ENCODE measurements at regions of chr5 and their contacts with region 1.

Region 1: GRCh38 chr5:131796793-131797693 is at the start of gene FNIP1:
- DNase-seq: peak; percentile 99
- ATAC-seq: peak; percentile 94
- H3K4me3 Mint-ChIP-seq: peak within 1 kb of the TSS; percentile 97
- H3K27ac Mint-ChIP-seq: peak within 1 kb of the TSS; percentile 91
- H3K4me1 Mint-ChIP-seq: peaks cover 33% of the 10 kb centered on the region
- H3K27me3 Mint-ChIP-seq: no peaks in the 10 kb centered on the region
- CTCF ChIP-seq: no peak
- total RNA-seq, gene FNIP1: 29.8 and 34.0 TPM in 2 replicates

Region 2: DNA sequence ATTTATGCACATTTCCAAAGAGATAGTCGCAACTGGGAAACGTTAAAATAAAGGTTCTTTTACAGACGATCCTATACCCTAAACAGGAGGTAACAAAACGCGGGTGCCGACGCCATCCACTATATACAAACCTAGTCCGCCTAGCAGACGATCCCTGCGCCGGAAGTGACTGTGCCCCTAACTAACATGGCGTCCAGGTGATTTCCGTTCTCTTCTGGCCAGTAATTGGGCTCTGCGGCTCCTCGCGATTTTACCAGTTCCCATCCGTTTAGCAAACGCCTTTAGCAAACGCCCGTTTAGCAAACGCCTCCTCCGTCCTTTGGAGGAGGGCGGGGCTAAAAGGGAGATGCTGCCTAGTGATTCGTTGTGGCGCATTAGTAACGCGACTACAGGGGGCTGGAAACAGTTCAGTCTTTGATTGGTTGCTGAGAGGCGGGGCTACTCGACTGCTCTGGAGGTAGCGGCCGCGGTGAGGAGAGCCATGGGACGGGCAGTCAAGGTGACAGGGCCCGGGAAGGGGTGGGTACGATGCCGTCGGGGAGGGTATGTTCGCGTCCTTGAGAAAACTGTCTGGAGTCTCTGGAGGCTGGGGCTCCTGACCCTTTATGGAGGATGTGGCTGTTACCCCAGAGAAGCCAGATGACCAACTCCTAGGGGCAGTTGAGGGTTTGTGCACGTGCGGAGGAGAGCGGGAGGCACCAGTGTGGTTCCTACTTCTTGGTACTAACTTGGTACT is 626.3 kb before region 1 on chr5 and contains the start of gene LYRM7:
- CTCF ChIA-PET with region 1: no interaction called
- POLR2A ChIA-PET with region 1: no interaction called
- intact Hi-C with region 1: loop called (anchors 2 kb)
- DNase-seq: peak; percentile 80
- ATAC-seq: peak; percentile 96
- H3K4me3 Mint-ChIP-seq: peak within 1 kb of the TSS; percentile 98
- H3K27ac Mint-ChIP-seq: peak within 1 kb of the TSS; percentile 93
- H3K4me1 Mint-ChIP-seq: peaks cover 42% of the 10 kb centered on the region
- H3K27me3 Mint-ChIP-seq: no peaks in the 10 kb centered on the region
- CTCF ChIP-seq: no peak
- total RNA-seq, gene LYRM7: 11.9 and 13.1 TPM in 2 replicates

Region 3: DNA sequence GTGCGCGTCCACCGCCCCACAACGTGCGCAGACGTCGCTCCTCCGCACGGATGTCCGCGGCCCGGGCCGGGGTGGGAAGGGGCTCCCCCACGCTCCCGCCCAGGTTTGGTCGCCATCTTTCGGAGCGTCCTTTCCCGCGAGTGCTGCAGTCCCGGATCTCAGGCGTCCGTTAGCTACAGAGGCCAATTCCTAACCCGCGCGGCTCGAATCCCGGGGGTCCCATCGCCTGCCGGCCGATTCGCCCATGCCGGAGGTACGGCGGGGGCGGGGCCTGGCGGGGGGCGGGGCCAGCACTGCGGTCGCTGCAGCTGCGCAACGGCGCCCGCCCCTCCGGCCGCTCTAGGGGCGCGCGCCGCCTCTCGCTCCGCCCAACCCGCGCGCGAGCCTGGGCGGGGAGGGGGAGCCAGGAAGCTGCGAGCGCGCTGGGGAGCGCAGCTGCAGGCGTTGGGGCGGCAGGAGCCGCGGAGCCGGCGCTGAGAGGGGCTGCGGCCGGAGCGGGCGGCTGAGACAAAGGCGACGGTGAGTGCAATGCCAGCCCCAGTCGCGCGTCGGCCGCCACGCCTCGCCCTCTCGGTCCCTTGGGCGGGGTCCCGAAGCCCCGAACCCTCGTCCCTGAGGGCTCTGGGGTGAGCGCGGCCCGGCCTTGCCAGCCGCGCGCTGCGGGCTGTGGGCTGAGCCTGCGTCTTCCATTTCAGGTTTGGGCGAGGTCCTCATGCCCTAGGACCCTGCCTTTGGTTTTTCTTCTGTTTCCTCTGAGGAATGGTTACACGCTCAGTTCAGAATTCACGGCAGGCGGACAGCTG is 533.2 kb before region 1 on chr5 and contains the start of gene CDC42SE2:
- CTCF ChIA-PET with region 1: no interaction called
- POLR2A ChIA-PET with region 1: no interaction called
- intact Hi-C with region 1: loop called (anchors 10 kb)
- DNase-seq: peak; percentile 94
- ATAC-seq: peak; percentile 86
- H3K4me3 Mint-ChIP-seq: peak within 1 kb of the TSS; percentile 90
- H3K27ac Mint-ChIP-seq: peak within 1 kb of the TSS; percentile 96
- H3K4me1 Mint-ChIP-seq: peaks cover 45% of the 10 kb centered on the region
- H3K27me3 Mint-ChIP-seq: no peaks in the 10 kb centered on the region
- CTCF ChIP-seq: no peak
- total RNA-seq, gene CDC42SE2: 114 and 122 TPM in 2 replicates

Region 4: DNA sequence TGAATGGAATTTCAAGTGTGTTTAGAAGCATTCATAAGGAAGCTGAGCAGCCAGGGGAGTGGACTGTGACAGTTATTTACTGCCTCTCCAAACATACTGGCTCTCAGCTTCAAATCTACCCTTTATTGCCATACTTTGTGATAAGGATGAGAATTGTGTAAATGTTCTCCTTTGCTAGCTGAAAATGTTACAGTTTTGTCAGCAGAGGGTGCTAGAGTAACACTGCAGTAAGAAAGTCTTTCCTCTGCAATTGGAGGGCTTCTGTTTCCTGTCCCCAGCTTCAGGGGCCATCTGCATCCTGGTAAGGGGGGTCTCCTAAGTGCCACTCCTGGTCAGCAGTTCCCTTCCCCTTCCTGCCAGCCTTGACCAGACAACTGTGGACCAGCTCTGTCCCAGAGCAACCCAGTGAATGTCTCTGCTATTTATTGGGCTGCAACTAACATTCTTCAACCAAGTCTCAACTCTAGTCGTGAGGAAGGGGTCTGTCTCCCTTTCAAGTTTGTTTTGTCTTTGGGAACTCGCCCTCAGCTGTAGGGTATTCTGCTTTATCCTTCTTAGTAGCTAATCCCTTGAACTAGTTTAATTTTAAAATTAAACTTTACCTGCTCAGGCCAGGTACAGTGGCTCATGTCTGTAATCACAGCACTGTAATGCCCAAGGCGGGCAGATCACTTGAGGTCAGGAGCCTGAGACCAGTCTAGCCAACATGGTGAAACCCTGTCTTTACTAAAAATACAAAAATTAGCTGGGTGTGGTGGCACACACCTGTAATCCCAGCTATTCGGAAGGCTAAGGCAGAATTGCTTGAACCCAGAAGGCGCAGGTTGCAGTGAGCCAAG is 207.3 kb before region 1 on chr5:
- CTCF ChIA-PET with region 1: interaction called, 11 read pairs
- POLR2A ChIA-PET with region 1: no interaction called
- intact Hi-C with region 1: no loop called
- DNase-seq: no peak
- ATAC-seq: peak; percentile 57
- H3K4me3 Mint-ChIP-seq: no peak overlapping the region
- H3K27ac Mint-ChIP-seq: no peak overlapping the region
- H3K4me1 Mint-ChIP-seq: peaks cover 25% of the 10 kb centered on the region
- H3K27me3 Mint-ChIP-seq: no peaks in the 10 kb centered on the region
- CTCF ChIP-seq: peak; percentile 48

Region 5: GRCh38 chr5:131647048-131647769 is 149.8 kb before region 1 on chr5:
- CTCF ChIA-PET with region 1: no interaction called
- POLR2A ChIA-PET with region 1: interaction called, 20 read pairs
- intact Hi-C with region 1: no loop called
- DNase-seq: no peak
- ATAC-seq: peak; percentile 92
- H3K4me3 Mint-ChIP-seq: peak overlapping the region; percentile 76
- H3K27ac Mint-ChIP-seq: peak overlapping the region; percentile 90
- H3K4me1 Mint-ChIP-seq: peaks cover 37% of the 10 kb centered on the region
- H3K27me3 Mint-ChIP-seq: no peaks in the 10 kb centered on the region
- CTCF ChIP-seq: no peak

Region 6: DNA sequence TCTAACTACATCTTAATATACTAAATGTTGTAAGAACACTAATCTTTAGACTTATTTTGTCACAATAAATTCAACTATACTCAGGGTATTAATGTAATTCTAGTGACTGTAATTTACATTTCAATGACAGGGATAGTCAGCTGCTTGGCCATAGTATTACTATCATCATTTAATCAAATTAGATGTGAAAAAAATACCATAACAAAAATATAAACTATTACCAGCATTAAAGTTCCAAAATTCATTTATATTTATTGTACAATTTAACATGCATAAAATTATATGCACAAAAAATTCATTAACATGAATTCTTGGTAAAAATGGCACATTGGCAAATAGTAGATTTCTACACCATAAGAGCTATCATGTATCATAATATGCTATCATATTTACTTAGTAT is 29.2 kb before region 1 on chr5:
- CTCF ChIA-PET with region 1: no interaction called
- POLR2A ChIA-PET with region 1: interaction called, 11 read pairs
- intact Hi-C with region 1: no loop called
- DNase-seq: no peak
- ATAC-seq: no peak
- H3K4me3 Mint-ChIP-seq: no peak overlapping the region
- H3K27ac Mint-ChIP-seq: no peak overlapping the region
- H3K4me1 Mint-ChIP-seq: peaks cover 30% of the 10 kb centered on the region
- H3K27me3 Mint-ChIP-seq: no peaks in the 10 kb centered on the region
- CTCF ChIP-seq: no peak

Region 7: DNA sequence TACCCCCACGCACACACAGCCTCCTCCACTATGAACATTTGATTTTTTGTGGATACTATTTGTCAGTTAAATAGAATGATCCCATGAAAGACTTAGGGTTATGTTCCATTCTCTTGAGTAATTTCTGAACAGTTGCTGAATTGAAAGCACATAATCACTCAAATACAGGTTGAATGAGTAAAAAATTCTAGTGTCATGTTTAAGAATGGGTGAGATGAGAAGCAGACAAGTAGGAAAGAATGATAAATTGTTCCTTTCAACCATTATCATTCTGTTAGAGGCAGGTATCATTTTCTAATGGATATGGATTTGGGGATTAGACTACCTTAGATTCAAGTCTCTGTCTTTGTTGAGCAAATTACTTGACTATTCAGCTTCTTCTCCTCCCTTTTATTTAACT is 779.1 kb after region 1 on chr5:
- CTCF ChIA-PET with region 1: no interaction called
- POLR2A ChIA-PET with region 1: no interaction called
- intact Hi-C with region 1: no loop called
- DNase-seq: no peak
- ATAC-seq: no peak
- H3K4me3 Mint-ChIP-seq: no peak overlapping the region
- H3K27ac Mint-ChIP-seq: no peak overlapping the region
- H3K4me1 Mint-ChIP-seq: peaks cover 2% of the 10 kb centered on the region
- H3K27me3 Mint-ChIP-seq: no peaks in the 10 kb centered on the region
- CTCF ChIP-seq: no peak

Region 8: DNA sequence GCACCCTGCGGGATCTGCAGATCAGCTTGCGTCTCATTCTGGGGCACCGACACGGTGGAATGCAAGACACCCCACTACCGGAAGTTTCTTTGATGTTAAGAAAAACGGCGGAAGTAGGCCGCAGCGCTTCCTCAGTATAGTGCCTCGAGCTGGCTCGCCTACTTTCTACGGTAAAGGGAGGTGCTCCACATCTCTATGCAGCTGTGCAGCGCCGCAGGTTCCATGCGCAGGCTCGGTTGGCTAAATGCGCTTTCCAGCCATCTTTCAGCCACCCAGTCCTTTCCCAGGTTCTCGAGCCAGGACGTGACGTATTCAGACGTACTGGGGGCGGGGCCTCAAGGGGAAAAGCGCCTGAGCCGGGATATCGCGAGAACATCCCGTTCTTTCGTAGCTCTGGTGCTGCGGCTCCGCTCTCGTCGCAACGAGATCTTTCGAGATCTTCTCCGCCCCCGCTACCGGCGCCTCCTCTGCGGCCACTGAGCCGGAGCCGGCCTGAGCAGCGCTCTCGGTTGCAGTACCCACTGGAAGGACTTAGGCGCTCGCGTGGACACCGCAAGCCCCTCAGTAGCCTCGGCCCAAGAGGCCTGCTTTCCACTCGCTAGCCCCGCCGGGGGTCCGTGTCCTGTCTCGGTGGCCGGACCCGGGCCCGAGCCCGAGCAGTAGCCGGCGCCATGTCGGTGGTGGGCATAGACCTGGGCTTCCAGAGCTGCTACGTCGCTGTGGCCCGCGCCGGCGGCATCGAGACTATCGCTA is 1254.7 kb after region 1 on chr5 and contains the start of gene HSPA4:
- CTCF ChIA-PET with region 1: no interaction called
- POLR2A ChIA-PET with region 1: no interaction called
- intact Hi-C with region 1: loop called (anchors 10 kb)
- DNase-seq: peak; percentile 93
- ATAC-seq: peak; percentile 85
- H3K4me3 Mint-ChIP-seq: peak within 1 kb of the TSS; percentile 96
- H3K27ac Mint-ChIP-seq: peak within 1 kb of the TSS; percentile 99
- H3K4me1 Mint-ChIP-seq: peaks cover 64% of the 10 kb centered on the region
- H3K27me3 Mint-ChIP-seq: no peaks in the 10 kb centered on the region
- CTCF ChIP-seq: no peak
- total RNA-seq, gene HSPA4: 152 and 162 TPM in 2 replicates